Activated CD4-positive, alpha-beta memory T cell treated with anti-CD3 and anti-CD28 coated beads for 36 hours (primary cell): ENCODE measurements at regions of chr6 and their contacts with region 1.

Region 1: DNA sequence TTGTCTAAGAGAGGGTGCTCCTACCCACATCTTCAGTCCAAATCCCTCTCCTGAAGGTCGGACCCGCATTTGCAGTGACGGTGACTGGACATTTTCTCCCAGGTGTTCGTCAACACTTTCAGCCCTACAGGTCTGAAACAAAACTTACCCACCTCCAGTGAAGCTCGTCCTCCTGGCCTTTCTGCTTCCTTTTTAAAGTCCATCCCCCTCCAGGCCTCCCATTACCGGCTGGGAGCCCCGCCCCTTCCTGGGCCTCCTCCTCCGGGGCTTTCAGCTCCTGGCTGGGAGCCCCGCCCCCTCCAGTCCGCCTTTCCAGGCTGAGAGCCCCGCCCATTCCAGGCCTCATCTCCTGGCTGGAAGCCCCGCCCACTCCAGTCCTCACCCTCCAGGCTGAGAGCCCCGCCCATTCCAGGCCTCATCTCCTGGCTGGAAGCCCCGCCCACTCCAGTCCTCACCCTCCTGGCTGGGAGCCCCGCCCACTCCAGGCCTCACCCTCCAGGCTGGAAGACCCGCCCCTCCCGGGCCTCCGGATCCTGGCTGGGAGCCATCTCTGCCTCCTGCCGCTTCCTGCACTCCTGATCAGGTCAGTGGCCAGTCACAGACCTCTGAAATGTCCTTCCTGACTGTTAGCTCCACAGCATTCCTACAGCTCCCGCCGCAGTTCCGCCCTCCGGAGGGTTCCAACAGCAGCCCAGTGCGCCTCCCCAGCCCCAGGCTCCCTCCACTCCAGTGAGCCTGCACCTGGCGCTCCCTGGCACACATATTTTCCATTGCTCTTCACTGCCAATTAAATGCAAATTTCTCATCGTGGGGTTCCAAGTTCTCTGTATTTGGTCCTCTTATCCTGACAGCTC is 98.5 kb downstream of the LY86 start:
- DNase-seq: peak; percentile 32
- H3K4me3 Mint-ChIP-seq: no peak overlapping the region
- H3K27ac Mint-ChIP-seq: no peak overlapping the region
- H3K4me1 Mint-ChIP-seq: peaks cover 33% of the 10 kb centered on the region
- H3K27me3 Mint-ChIP-seq: peaks cover 4% of the 10 kb centered on the region

Region 2: DNA sequence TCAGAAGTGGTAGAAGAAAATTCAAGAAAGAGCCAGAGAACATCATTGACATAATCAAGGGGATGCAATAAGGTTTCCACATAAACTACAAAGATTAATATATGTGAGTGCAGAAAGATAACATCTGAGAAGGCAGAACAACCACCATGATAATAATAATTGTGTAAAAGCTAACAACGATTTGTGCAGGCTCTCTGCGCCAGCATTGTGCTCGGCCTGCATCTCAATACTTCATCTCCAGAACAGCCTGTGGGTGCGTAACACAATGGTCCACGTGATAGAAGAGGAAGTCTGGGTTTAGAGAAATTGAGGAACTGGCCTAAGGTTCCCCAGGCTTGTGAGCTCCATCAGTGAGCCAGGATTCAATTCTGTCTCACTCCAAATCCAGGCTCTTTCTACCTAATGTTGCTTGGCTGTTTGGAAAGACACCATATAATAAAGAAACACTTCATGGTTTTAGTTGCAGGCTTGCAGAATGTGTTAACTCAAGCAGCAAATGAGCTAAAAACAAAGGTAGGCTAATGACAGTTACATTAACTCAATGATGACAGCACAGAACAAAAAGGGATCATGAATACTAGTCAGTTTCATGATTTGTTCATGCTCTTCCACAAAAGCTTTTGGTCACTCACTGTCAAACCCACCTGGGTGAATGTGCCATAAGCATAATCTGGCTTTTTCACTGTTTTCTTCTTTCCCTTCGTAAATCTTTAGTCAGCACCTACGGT is 27.2 kb before region 1 on chr6:
- CTCF ChIA-PET with region 1: no interaction called
- POLR2A ChIA-PET with region 1: no interaction called
- intact Hi-C with region 1: loop called (anchors 1 kb)
- DNase-seq: no peak
- H3K4me3 Mint-ChIP-seq: no peak overlapping the region
- H3K27ac Mint-ChIP-seq: peak overlapping the region; percentile 89
- H3K4me1 Mint-ChIP-seq: peaks cover 54% of the 10 kb centered on the region
- H3K27me3 Mint-ChIP-seq: peaks cover 2% of the 10 kb centered on the region

Region 3: DNA sequence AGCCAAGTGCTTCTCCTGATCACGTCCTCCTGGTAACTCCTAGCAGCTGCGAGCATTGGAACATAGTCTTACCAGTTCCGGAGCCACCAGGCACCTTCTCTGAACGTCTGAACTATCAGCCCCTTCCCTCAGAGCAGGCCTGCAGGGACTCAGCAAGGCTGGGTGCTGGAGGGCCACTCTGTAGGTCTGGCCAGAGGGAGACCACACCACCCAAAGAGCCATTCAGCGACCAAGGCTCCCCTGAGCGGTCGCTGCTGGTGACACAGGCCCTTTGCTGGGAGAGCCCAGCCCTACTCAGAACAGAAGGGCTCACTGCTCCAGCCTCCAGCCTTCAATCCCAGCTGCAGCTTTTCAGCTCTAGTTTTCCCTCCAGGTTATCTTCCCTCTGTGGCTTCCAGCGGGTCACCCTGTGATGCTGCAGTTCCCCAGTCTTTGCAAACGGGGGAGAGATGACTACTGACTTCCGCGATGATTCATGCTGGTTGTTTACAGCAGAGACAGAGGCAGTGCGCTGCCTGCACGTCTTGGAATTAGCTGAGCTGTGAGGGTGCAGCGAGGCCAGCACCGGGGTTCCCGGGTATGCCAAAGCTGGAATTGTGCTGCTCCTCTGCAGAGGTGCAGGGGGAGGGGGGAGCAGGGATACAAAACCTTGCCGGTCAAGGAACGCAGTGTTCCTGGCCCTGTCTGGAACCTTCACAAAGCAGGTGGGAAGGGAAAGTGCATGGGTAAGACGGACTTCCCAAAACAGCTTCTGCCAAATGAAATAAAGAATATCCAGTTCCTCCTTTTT is 62.9 kb after region 1 on chr6:
- CTCF ChIA-PET with region 1: no interaction called
- POLR2A ChIA-PET with region 1: no interaction called
- intact Hi-C with region 1: loop called (anchors 1 kb)
- DNase-seq: peak; percentile 75
- H3K4me3 Mint-ChIP-seq: no peak overlapping the region
- H3K27ac Mint-ChIP-seq: peak overlapping the region; percentile 40
- H3K4me1 Mint-ChIP-seq: peaks cover 23% of the 10 kb centered on the region
- H3K27me3 Mint-ChIP-seq: peaks cover 5% of the 10 kb centered on the region

Region 4: GRCh38 chr6:6798448-6798860 is 111.5 kb after region 1 on chr6:
- CTCF ChIA-PET with region 1: no interaction called
- POLR2A ChIA-PET with region 1: no interaction called
- intact Hi-C with region 1: loop called (anchors 1 kb)
- DNase-seq: peak; percentile 68
- H3K4me3 Mint-ChIP-seq: no peak overlapping the region
- H3K27ac Mint-ChIP-seq: peak overlapping the region; percentile 78
- H3K4me1 Mint-ChIP-seq: peaks cover 40% of the 10 kb centered on the region
- H3K27me3 Mint-ChIP-seq: peaks cover 6% of the 10 kb centered on the region

Region 5: GRCh38 chr6:6856538-6857523 is 169.9 kb after region 1 on chr6:
- CTCF ChIA-PET with region 1: no interaction called
- POLR2A ChIA-PET with region 1: no interaction called
- intact Hi-C with region 1: loop called (anchors 10 kb)
- DNase-seq: peak; percentile 82
- H3K4me3 Mint-ChIP-seq: peak overlapping the region; percentile 57
- H3K27ac Mint-ChIP-seq: peak overlapping the region; percentile 80
- H3K4me1 Mint-ChIP-seq: peaks cover 28% of the 10 kb centered on the region
- H3K27me3 Mint-ChIP-seq: no peaks in the 10 kb centered on the region

Region 6: GRCh38 chr6:7086488-7086887 is 399.5 kb after region 1 on chr6:
- CTCF ChIA-PET with region 1: no interaction called
- POLR2A ChIA-PET with region 1: no interaction called
- intact Hi-C with region 1: loop called (anchors 2 kb)
- DNase-seq: peak; percentile 57
- H3K4me3 Mint-ChIP-seq: peak overlapping the region; percentile 21
- H3K27ac Mint-ChIP-seq: no peak overlapping the region
- H3K4me1 Mint-ChIP-seq: peaks cover 28% of the 10 kb centered on the region
- H3K27me3 Mint-ChIP-seq: peaks cover 5% of the 10 kb centered on the region

Region 7: GRCh38 chr6:7615611-7616383 is 928.8 kb after region 1 on chr6:
- CTCF ChIA-PET with region 1: no interaction called
- POLR2A ChIA-PET with region 1: no interaction called
- intact Hi-C with region 1: loop called (anchors 10 kb)
- DNase-seq: peak; percentile 35
- H3K4me3 Mint-ChIP-seq: no peak overlapping the region
- H3K27ac Mint-ChIP-seq: no peak overlapping the region
- H3K4me1 Mint-ChIP-seq: peaks cover 16% of the 10 kb centered on the region
- H3K27me3 Mint-ChIP-seq: peaks cover 4% of the 10 kb centered on the region